Ovary (tissue), 10 donors: ENCODE measurements at regions of chr18 and their contacts with region 1.

Region 1: DNA sequence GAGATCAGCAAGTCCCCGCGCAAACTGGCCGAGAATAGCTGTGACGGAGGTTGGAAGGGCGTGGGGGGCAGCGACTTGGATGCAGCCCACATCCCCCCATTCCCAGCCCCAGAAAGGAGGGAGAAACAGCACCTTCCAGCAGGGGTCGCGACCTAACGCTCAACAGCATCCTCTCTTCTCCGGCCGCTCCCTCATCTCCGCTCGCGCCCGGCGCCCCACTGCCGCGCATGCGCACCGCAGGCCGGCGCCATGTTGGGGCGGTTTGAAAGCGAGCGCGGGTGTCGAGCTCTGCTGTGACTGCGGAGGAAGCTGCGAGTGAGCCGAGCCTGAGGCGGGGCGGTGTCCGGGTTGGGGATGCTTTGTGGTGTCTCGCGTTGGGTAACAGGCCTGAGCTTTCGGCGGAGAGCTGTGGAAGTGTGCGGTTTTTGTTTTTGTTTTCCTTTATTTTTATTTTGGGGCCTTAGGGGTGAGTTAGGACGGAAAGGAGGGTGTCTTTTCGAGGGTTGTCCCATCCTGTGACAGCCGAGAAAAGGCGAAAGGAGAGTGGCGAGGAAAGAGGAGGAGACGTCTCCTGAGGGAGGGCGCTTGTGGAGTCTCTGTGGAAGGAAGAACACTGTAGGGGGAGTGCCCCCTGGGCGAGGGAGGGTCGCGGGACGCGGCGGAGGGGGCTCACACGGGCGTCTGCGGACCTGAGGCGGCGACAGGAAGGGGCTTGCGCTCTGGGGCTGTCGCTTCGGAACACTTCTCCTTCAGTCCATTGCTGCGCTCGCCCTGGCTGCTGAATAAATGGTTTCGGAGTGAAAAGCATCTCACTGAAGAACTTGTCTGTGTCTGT is at the starts of genes C18orf54 and STARD6:
- DNase-seq: peak; percentile 76 to 88 (median 83)
- H3K4me3 ChIP-seq: peak within 1 kb of the TSS; percentile 63
- H3K27ac ChIP-seq: peak within 1 kb of the TSS; percentile 24 to 37
- H3K4me1 ChIP-seq: peaks cover 2% of the 10 kb centered on the region
- H3K27me3 ChIP-seq: no peaks in the 10 kb centered on the region
- CTCF ChIP-seq: no peak
- EP300 ChIP-seq: no peak
- POLR2A ChIP-seq: no peak
- total RNA-seq, gene C18orf54: 1.2 to 2.5 (median 1.9) TPM
- total RNA-seq, gene STARD6: not detected

Region 2: GRCh38 chr18:54224379-54225014 is 133.4 kb before region 1 on chr18 and contains the start of gene MBD2:
- intact Hi-C with region 1: loop called in 1 of 4 experiments (anchors 10 kb)
- DNase-seq: peak; percentile 91 to 96 (median 93)
- H3K4me3 ChIP-seq: peak within 1 kb of the TSS; percentile 66
- H3K27ac ChIP-seq: no peak within 1 kb of the TSS
- H3K4me1 ChIP-seq: peaks cover 5% of the 10 kb centered on the region
- H3K27me3 ChIP-seq: no peaks in the 10 kb centered on the region
- CTCF ChIP-seq: no peak
- EP300 ChIP-seq: no peak
- POLR2A ChIP-seq: peak; percentile 36
- total RNA-seq, gene MBD2: 21.9 to 59.0 (median 45.0) TPM

Region 3: DNA sequence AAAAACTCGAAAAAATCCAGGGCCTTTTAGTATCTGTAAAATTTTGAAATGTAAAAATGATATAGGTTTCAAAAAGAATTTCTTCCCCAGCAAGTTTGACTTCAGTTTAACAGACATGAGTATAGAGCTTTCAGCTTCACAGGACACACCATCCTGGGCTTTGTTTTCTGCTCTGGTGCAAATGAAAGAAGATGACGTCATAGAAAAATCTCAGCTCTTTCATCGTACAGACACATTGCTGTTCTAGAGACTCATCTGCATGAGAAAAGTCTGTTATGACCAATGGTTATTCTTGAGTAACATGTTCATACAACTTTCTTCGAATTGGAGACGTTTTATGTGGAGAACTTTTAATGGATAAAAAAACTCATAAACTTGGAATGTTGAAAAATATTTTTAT is 121.5 kb after region 1 on chr18:
- intact Hi-C with region 1: no loop called
- DNase-seq: no peak
- H3K4me3 ChIP-seq: no peak overlapping the region
- H3K27ac ChIP-seq: no peak overlapping the region
- H3K4me1 ChIP-seq: no peaks in the 10 kb centered on the region
- H3K27me3 ChIP-seq: no peaks in the 10 kb centered on the region
- CTCF ChIP-seq: no peak
- EP300 ChIP-seq: no peak
- POLR2A ChIP-seq: no peak